A549 (cell line): ENCODE measurements at regions of chr5 and their contacts with region 1.

Region 1: GRCh38 chr5:33969572-33970452 is 14.7 kb downstream of the SLC45A2 start:
- DNase-seq: peak; percentile 44 to 58
- ATAC-seq: peak; percentile 97
- H3K4me3 ChIP-seq: no peak overlapping the region
- H3K27ac ChIP-seq: no peak overlapping the region
- H3K4me1 ChIP-seq: no peaks in the 10 kb centered on the region
- CTCF ChIP-seq: peak; percentile 64
- EP300 ChIP-seq: no peak
- POLR2A ChIP-seq: no peak
- RAD21 ChIP-seq: peak; percentile 80 to 88

Region 2: GRCh38 chr5:33440482-33441240 is 529.2 kb before region 1 on chr5 and contains the start of gene TARS1:
- CTCF ChIA-PET with region 1: interaction called, 32 read pairs
- POLR2A ChIA-PET with region 1: interaction called, 5 read pairs
- DNase-seq: peak; percentile 99 to 100
- ATAC-seq: peak; percentile 96 to 97
- H3K4me3 ChIP-seq: peak within 1 kb of the TSS; percentile 90
- H3K27ac ChIP-seq: peak within 1 kb of the TSS; percentile 94 to 99
- H3K4me1 ChIP-seq: peaks cover 31% of the 10 kb centered on the region
- CTCF ChIP-seq: no peak
- EP300 ChIP-seq: 0 out of 5 replicates have a peak, but pooled peaks of 1 of the 2 experiments have one; percentile 13
- POLR2A ChIP-seq: peak; percentile 81
- RAD21 ChIP-seq: no peak
- polyA plus RNA-seq, gene TARS1: 247 and 398 TPM in 2 replicates

Region 3: GRCh38 chr5:33936004-33936380 is 33.8 kb before region 1 on chr5:
- CTCF ChIA-PET with region 1: interaction called, 11 read pairs
- POLR2A ChIA-PET with region 1: no interaction called
- DNase-seq: peak; percentile 12 to 20
- ATAC-seq: peak; percentile 53 to 79; a peak in 3 of 6 replicates
- H3K4me3 ChIP-seq: no peak overlapping the region
- H3K27ac ChIP-seq: no peak overlapping the region
- H3K4me1 ChIP-seq: peaks cover 9% of the 10 kb centered on the region; the same call in 2 of the 3 replicates
- CTCF ChIP-seq: no peak
- EP300 ChIP-seq: no peak
- POLR2A ChIP-seq: no peak
- RAD21 ChIP-seq: no peak

Region 4: GRCh38 chr5:33958176-33958575 is 11.6 kb before region 1 on chr5:
- CTCF ChIA-PET with region 1: interaction called, 37 read pairs
- POLR2A ChIA-PET with region 1: no interaction called
- DNase-seq: no peak
- ATAC-seq: no peak
- H3K4me3 ChIP-seq: no peak overlapping the region
- H3K27ac ChIP-seq: no peak overlapping the region
- H3K4me1 ChIP-seq: no peaks in the 10 kb centered on the region
- CTCF ChIP-seq: no peak
- EP300 ChIP-seq: no peak
- POLR2A ChIP-seq: no peak
- RAD21 ChIP-seq: no peak

Region 5: DNA sequence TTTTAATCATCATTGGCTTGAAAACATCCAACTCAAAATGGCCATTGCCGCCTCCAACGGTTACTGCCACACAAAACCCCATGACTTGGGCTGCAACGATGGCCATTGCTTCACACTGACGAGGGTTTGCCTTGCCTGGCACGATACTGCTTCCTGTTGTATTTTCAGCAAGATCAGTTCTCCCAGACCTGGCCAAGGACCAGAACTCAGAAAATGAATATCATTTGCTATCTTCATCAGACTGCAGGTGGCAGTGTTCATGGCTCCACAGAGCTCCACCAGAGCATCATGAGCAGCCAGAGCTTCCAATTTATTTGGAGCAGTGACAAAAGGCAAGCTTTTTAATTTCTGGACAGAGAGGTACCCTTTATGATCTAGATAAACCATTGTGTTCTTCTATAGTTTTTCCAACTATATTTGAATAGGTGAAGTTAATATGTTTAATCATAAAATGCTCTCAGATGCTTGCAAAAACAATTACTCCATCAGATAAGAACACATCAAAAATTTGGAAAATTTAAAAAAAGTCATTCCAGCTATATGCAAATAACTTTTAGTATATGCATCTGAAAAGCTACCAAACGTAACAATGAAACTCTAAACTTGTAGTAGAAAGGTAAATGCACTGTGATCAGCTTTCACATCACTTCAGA is 27.6 kb after region 1 on chr5:
- CTCF ChIA-PET with region 1: interaction called, 12 read pairs
- POLR2A ChIA-PET with region 1: no interaction called
- DNase-seq: peak; percentile 47 to 70
- ATAC-seq: peak; percentile 90 to 94; a peak in 5 of 6 replicates
- H3K4me3 ChIP-seq: no peak overlapping the region
- H3K27ac ChIP-seq: no peak overlapping the region
- H3K4me1 ChIP-seq: peaks cover 4% of the 10 kb centered on the region; the same call in 2 of the 3 replicates
- CTCF ChIP-seq: peak; percentile 76
- EP300 ChIP-seq: no peak
- POLR2A ChIP-seq: no peak
- RAD21 ChIP-seq: peak; percentile 64 to 66